OCI-LY7 (cell line): ENCODE measurements at regions of chr1 and their contacts with region 1.

Region 1: DNA sequence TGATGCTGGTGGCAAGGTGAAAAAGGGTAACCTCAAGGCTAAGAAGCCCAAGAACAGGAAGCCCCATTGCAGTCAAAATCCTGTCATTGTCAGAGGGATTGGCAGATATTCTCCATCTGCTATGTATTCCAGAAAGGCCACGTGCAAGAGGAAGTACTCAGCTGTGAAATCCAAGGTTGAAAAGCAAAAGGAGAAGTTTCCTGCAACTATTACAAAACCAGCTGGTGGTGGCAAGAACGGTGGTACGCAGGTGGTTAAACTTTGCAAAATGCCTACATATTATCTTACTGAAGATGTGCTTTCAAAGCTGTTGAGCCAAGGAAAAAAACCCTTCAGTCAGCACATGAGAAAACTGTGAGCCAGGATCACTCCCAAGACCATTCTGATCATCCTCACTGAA is 13.7 kb upstream of the VPS45 start:
- DNase-seq: peak; percentile 6
- H3K4me3 ChIP-seq: no peak overlapping the region
- H3K27ac ChIP-seq: no peak overlapping the region
- H3K4me1 ChIP-seq: peaks cover 19% of the 10 kb centered on the region
- CTCF ChIP-seq: no peak

Region 2: GRCh38 chr1:149927503-149928387 is 126.2 kb before region 1 on chr1 and contains the start of gene SF3B4:
- CTCF ChIA-PET with region 1: no interaction called
- POLR2A ChIA-PET with region 1: no interaction called
- intact Hi-C with region 1: no loop called
- DNase-seq: peak; percentile 96
- H3K4me3 ChIP-seq: peak within 1 kb of the TSS; percentile 81
- H3K27ac ChIP-seq: peak within 1 kb of the TSS; percentile 89
- H3K4me1 ChIP-seq: peaks cover 37% of the 10 kb centered on the region
- CTCF ChIP-seq: no peak
- total RNA-seq, gene SF3B4: 16.7 and 18.0 TPM in 2 replicates

Region 3: GRCh38 chr1:150001415-150001814 is 52.5 kb before region 1 on chr1:
- CTCF ChIA-PET with region 1: no interaction called
- POLR2A ChIA-PET with region 1: interaction called, 3 read pairs
- intact Hi-C with region 1: loop called (anchors 5 kb)
- DNase-seq: no peak
- H3K4me3 ChIP-seq: no peak overlapping the region
- H3K27ac ChIP-seq: no peak overlapping the region
- H3K4me1 ChIP-seq: peaks cover 14% of the 10 kb centered on the region
- CTCF ChIP-seq: no peak

Region 4: DNA sequence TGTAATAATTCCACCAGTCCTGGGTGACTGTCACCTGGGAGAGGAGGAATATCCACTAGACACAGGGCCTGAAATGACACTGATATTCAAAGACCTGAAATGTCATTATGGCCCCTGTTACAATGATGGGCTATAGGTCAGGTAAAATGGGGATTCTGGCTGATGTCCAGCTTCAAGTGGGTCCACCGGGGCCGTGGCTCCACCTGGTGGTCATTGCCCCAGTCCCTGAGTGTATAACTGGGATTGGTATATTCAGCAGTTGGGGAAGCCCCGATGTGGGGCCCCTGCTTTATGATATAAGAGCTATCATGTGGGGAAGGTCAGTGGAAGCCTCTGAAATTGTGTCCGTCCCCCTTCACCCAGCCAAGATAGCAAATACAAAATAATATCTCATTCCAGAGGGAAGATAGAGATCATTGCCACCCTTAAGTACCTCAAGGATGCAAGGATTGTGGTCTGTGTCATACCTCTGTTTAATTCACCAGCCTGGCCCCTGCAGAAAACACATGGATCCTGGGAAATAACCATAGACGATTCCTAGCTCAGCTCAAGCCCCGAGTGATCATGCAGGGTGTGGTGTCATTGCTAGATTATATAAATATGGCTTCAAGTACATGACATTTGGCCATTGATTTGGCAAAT is 115.2 kb after region 1 on chr1:
- CTCF ChIA-PET with region 1: no interaction called
- POLR2A ChIA-PET with region 1: no interaction called
- intact Hi-C with region 1: loop called (anchors 5 kb)
- DNase-seq: peak; percentile 68
- H3K4me3 ChIP-seq: no peak overlapping the region
- H3K27ac ChIP-seq: no peak overlapping the region
- H3K4me1 ChIP-seq: peaks cover 22% of the 10 kb centered on the region
- CTCF ChIP-seq: peak; percentile 90

Region 5: GRCh38 chr1:150309770-150310508 is 256.0 kb after region 1 on chr1:
- CTCF ChIA-PET with region 1: no interaction called
- POLR2A ChIA-PET with region 1: no interaction called
- intact Hi-C with region 1: no loop called
- DNase-seq: no peak
- H3K4me3 ChIP-seq: no peak overlapping the region
- H3K27ac ChIP-seq: no peak overlapping the region
- H3K4me1 ChIP-seq: no peaks in the 10 kb centered on the region
- CTCF ChIP-seq: no peak